Posterior vena cava (tissue), 2 donors: ENCODE measurements at regions of chr14 and their contacts with region 1.

Region 1: DNA sequence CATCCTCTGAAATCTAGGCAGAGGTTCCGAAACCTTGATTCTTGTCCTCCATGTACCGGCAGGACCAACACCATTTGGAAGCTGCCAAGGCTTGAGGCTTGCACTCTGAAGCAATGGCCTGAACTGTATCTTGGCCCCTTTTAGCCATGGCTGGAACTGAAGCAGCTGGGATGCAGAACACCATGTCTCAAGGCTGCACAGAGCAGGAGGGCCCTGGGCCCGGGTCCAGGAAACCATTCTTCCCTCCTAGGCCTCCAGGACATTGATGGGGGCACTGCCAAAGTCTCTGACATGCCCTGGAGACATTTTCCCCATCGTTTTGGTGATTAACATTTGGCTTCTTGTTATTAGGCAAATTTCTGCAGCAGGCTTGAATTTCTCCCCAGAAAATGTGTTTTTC is 198.7 kb downstream of the EFCAB11 start:
- DNase-seq: no peak

Region 2: DNA sequence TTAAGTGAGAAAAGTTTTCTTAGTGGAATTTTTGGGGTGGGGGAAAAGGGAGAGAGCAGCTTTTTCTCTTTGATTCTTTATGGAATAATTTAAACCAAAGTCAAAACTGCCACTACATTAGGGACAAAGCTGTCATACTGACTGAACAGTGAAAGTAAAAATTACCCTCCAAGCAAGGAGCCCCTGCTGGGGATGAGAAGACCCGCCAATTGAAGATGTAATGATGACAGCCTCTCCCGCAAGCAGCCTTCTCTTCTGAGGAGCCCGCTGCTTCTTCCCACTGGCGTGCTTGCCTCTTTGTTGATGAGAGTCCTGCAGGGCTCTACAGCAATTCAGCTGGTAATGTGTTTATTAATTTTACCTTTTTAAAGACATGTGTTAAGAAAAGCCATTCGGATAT is 47.7 kb after region 1 on chr14:
- intact Hi-C with region 1: loop called in 1 of 2 experiments (anchors 2 kb)
- DNase-seq: no peak